ENCODE measurements at regions of chr2 and their contacts with region 1.

Region 1: GRCh38 chr2:32356735-32357644 is at the start of gene BIRC6:
- DNase-seq: peak; percentile 98 to 99
- H3K4me3 ChIP-seq: peak within 1 kb of the TSS; percentile 71 to 100 (median 88)
- H3K27ac ChIP-seq: peak within 1 kb of the TSS; percentile 88 to 96 (median 94)
- H3K4me1 ChIP-seq: peaks cover 21 to 24% of the 10 kb centered on the region in 2 donors
- H3K27me3 ChIP-seq: no peaks in the 10 kb centered on the region
- CTCF ChIP-seq: peak in 1 of 6 experiments; percentile 29
- POLR2A ChIP-seq: peak; percentile 54 to 92
- total RNA-seq, gene BIRC6: 142 to 268 (median 218) TPM

Region 2: DNA sequence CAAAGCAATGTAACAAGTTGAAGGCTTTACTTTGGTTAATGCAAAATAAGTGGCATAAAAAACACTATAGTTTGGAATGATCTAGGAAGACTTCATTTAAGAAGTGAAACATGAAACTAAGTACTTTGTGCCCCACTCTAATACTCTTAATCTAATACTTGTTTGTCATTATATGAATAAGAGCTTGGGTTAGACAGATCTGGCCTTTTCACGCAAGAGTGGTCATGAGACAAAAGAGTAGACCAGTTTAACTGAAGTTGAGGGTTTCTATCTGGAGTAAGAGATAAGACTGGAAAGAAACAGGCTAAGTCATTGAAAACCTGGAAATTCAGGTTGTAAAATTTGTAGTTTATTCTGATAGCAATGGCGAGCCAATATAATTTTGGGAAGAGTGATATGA is 188.5 kb before region 1 on chr2:
- intact Hi-C with region 1: loop called (anchors 5 kb)
- DNase-seq: no peak
- H3K4me3 ChIP-seq: no peak overlapping the region
- H3K27ac ChIP-seq: no peak overlapping the region
- H3K4me1 ChIP-seq: peaks cover 6 to 19% of the 10 kb centered on the region in 2 donors
- H3K27me3 ChIP-seq: no peaks in the 10 kb centered on the region
- CTCF ChIP-seq: no peak
- POLR2A ChIP-seq: no peak

Region 3: GRCh38 chr2:32277674-32278482 is 79.1 kb before region 1 on chr2 and contains the start of gene YIPF4:
- intact Hi-C with region 1: loop called (anchors 10 kb)
- DNase-seq: peak; percentile 82 to 84
- H3K4me3 ChIP-seq: peak within 1 kb of the TSS; percentile 95 to 99 (median 95)
- H3K27ac ChIP-seq: peak within 1 kb of the TSS; percentile 54 to 77 (median 56)
- H3K4me1 ChIP-seq: peaks cover 11 to 16% of the 10 kb centered on the region in 2 donors
- H3K27me3 ChIP-seq: no peaks in the 10 kb centered on the region
- CTCF ChIP-seq: no peak
- POLR2A ChIP-seq: peak; percentile 3 to 61
- total RNA-seq, gene YIPF4: 17.6 to 28.3 (median 23.8) TPM

Measured in thyroid gland (tissue), 4 donors.